CD4-positive, alpha-beta memory T cell (primary cell): ENCODE measurements at regions of chr6 and their contacts with region 1.

Region 1: GRCh38 chr6:99613409-99613704 is 6.7 kb downstream of the PRDM13 start:
- DNase-seq: no peak
- H3K4me3 ChIP-seq: no peak overlapping the region
- H3K4me3 Mint-ChIP-seq: peak overlapping the region in 3 of 8 donors; percentile 35 to 80 (median 63)
- H3K27ac ChIP-seq: no peak overlapping the region
- H3K27ac Mint-ChIP-seq: no peak overlapping the region
- H3K4me1 ChIP-seq: peaks cover 31% of the 10 kb centered on the region
- H3K4me1 Mint-ChIP-seq: peaks cover 9 to 42% (median 21%) of the 10 kb centered on the region in 4 donors
- H3K27me3 ChIP-seq: peaks cover 90% of the 10 kb centered on the region
- H3K27me3 Mint-ChIP-seq: peaks cover 61 to 70% of the 10 kb centered on the region in 2 donors

Region 2: DNA sequence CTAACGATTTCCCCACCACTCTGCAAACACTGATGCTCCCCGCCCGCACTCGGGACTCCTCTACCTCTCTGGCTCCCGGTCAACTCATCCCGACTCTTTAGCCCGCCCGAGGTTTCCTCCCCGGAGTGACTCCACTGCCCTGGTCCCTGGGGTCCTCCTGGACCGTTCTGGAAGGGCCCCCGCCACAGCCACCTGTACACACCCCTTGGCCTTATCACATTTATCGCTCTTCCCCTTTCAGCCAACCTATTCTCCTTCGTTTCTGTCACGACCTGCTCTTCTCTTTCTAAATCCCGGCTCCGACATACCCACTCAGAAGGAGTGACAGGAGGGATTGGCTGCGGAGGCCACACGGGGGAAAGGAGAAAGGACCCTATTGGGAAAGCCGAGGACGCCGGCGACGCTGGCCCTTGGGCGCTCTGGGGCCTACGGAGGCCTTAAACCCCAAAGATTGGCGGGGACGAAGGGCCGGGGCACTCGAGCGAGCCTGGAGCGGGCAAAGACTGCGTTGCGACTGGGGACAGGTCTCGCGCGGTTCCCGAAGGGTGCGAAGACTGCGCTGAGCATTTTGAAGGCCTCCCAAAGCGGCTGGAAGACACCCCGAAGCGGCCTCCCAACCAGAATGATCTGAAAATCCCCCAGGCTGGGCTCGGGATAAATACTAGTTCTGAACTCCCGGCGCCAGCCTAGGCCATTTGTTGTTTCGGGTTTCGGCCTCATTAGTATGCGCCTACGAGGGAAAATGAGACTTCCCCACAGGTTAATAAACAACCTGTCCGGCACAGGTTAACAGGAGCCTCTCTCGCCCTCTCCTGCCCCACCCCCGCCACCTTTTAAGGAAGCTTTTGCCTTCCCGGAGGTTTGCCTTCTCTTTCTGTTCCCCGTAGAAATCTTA is 842.1 kb after region 1 on chr6:
- CTCF ChIA-PET with region 1: no interaction called
- POLR2A ChIA-PET with region 1: no interaction called
- intact Hi-C with region 1: loop called (anchors 10 kb)
- DNase-seq: no peak
- H3K4me3 ChIP-seq: no peak overlapping the region
- H3K4me3 Mint-ChIP-seq: peak overlapping the region in 4 of 8 donors; percentile 3 to 66 (median 24)
- H3K27ac ChIP-seq: no peak overlapping the region
- H3K27ac Mint-ChIP-seq: peak overlapping the region in 4 of 7 donors; percentile 7 to 77 (median 62)
- H3K4me1 ChIP-seq: no peaks in the 10 kb centered on the region
- H3K4me1 Mint-ChIP-seq: peaks cover 0 to 3% (median under 1%) of the 10 kb centered on the region in 4 donors
- H3K27me3 ChIP-seq: peaks cover 75% of the 10 kb centered on the region
- H3K27me3 Mint-ChIP-seq: peaks cover 42 to 57% of the 10 kb centered on the region in 2 donors